Activated CD8-positive, alpha-beta T cell treated with anti-CD3 and anti-CD28 coated beads for 36 hours (primary cell): ENCODE measurements at regions of chr2 and their contacts with region 1.

Region 1: DNA sequence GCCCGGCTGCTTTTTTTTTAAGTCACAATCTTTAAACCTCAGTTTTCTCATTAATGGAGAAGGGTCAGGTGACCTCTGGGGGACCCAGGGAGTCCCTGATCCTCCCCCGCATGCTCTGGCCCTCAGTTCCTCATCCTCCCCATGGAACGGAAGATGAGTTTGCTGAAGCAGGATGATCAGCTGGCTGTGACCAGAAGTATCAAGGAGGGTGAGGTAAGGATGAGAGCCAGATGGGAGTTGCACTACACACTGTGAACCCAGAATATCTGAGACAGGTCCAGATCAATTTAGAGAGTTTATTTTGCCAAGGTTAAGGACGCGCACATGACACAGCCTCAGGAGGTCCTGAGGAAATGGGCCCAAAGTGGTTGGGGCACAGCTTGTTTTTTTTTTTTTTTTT is 3.8 kb downstream of the CATIP start:
- DNase-seq: no peak
- ATAC-seq: no peak
- H3K4me3 Mint-ChIP-seq: no peak overlapping the region
- H3K27ac Mint-ChIP-seq: no peak overlapping the region
- H3K4me1 Mint-ChIP-seq: no peaks in the 10 kb centered on the region
- H3K27me3 Mint-ChIP-seq: no peaks in the 10 kb centered on the region
- CTCF ChIP-seq: no peak

Region 2: DNA sequence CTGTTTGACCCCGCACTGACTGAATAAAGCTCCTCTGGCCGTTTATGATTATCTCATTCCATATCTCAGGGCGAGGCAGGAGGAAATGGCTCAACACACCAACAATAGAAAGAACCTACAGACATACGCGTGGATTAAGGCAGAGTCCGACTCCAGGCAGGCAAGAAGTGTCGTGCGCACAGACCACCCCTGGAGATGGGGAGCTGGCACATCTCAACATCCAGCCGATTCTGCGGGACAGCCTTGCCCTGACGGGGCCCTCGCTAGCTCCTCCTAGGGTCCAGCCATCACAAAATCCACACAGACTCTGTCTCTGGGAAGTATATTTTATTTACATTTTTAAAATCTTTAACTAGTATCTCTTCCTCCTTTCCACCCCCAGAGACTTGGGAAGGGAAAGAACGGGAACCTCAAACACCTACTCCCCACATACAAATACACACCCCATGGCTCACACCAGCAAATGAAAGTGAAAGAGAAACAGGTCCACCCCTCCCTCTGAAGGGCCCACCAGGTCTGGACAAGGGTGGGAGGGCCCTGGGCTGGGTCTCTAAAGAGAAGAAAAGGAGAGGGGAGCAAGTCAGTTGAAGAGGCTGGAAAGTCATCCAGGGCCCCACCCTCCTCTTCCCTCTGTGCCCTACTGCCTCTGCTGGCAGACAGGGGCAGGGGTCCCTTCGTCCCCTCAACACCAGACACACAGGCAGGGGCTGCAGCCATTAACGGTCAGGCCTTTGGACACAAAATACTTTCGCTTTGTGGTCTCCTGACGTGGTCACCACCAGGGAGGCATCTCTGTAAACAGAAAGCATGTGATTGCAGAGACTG is 96.4 kb before region 1 on chr2:
- CTCF ChIA-PET with region 1: no interaction called
- POLR2A ChIA-PET with region 1: no interaction called
- intact Hi-C with region 1: no loop called
- DNase-seq: no peak
- ATAC-seq: peak; percentile 63
- H3K4me3 Mint-ChIP-seq: no peak overlapping the region
- H3K27ac Mint-ChIP-seq: peak overlapping the region; percentile 7
- H3K4me1 Mint-ChIP-seq: peaks cover 26% of the 10 kb centered on the region
- H3K27me3 Mint-ChIP-seq: no peaks in the 10 kb centered on the region
- CTCF ChIP-seq: no peak

Region 3: DNA sequence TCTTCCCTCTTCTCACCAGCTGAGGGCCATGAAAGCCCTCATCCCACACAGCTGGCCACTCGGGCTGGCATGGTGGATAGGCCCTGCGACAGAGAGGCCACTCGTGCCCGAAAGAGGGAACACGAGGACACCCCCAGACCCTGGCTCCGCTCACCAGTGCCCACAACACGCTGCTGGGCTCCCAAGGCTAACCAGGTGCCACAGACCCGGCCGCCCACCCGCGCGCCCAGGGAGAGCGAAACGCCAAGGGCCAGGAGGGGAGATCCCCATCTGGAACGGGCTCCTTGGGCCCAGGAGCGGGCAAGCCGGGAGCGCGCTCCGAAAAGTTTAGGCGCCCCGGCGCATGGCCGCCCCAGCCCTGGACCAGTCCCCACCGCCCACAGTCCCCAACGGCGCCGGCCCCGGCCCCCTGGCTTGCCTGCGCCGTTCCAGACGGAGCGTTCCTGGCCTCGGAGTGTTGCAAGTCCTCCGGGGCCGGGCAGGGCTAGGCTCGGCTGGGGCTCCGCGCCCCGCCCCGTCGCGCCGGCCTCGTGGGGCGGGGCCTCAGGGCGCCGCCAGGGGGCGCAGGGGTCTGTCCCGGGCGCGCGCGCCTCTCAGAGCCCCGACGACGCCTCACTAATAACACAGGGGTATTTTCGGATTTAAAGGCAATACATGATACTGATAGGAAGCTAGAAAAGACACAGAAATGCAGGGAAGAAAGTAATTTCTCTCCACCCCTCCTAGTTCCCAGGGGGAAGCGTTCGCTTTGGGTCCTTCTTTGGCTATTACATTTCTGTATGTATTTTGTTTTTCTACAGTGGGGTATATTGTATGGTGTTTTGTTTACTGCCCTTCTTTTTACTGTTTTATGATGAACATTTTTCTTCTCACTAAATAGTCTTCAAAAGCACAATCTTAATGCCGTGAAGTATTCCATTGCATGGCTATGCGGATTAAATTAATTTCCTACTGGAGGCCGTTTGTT is 68.1 kb before region 1 on chr2 and contains the start of gene TMBIM1:
- CTCF ChIA-PET with region 1: interaction called, 14 read pairs
- POLR2A ChIA-PET with region 1: interaction called, 4 read pairs
- intact Hi-C with region 1: no loop called
- DNase-seq: peak; percentile 83
- ATAC-seq: peak; percentile 92
- H3K4me3 Mint-ChIP-seq: peak within 1 kb of the TSS; percentile 88
- H3K27ac Mint-ChIP-seq: peak within 1 kb of the TSS; percentile 92
- H3K4me1 Mint-ChIP-seq: peaks cover 49% of the 10 kb centered on the region
- H3K27me3 Mint-ChIP-seq: no peaks in the 10 kb centered on the region
- CTCF ChIP-seq: peak; percentile 97
- total RNA-seq, gene TMBIM1: 53.5 to 57.9 TPM

Region 4: DNA sequence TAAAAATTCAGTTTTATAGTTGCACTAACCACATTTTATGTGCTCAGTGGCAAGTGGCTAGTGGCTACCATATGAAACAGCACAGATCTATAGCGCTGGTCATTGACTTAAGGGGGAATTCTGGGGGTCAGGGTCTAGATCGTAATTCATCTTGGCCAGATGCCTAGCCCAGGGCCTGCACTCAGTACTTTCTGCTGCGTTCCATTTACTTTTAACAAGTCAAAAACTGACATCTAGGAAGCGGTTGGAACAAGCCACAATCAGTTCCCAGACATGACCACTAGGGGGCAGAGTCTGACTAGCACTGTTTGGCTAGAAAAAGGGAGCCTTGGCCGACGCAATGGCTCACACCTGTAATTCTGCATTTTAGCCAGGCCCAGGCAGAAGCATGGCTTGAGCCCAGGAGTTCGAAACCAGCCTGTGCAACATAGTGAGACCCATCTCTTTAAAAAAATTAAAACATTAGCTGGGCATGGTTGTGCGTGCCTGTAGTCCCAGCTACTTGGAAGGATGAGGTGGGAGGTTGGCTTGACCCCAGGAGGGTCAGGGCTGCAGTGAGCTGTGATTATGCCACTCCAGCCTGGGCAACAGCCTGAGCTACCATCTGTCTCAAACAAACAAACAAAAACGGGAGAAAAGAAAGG is 59.1 kb before region 1 on chr2:
- CTCF ChIA-PET with region 1: interaction called, 54 read pairs
- POLR2A ChIA-PET with region 1: interaction called, 3 read pairs
- intact Hi-C with region 1: loop called (anchors 1 kb)
- DNase-seq: peak; percentile 95
- ATAC-seq: peak; percentile 97
- H3K4me3 Mint-ChIP-seq: no peak overlapping the region
- H3K27ac Mint-ChIP-seq: no peak overlapping the region
- H3K4me1 Mint-ChIP-seq: peaks cover 5% of the 10 kb centered on the region
- H3K27me3 Mint-ChIP-seq: no peaks in the 10 kb centered on the region
- CTCF ChIP-seq: peak; percentile 90

Region 5: DNA sequence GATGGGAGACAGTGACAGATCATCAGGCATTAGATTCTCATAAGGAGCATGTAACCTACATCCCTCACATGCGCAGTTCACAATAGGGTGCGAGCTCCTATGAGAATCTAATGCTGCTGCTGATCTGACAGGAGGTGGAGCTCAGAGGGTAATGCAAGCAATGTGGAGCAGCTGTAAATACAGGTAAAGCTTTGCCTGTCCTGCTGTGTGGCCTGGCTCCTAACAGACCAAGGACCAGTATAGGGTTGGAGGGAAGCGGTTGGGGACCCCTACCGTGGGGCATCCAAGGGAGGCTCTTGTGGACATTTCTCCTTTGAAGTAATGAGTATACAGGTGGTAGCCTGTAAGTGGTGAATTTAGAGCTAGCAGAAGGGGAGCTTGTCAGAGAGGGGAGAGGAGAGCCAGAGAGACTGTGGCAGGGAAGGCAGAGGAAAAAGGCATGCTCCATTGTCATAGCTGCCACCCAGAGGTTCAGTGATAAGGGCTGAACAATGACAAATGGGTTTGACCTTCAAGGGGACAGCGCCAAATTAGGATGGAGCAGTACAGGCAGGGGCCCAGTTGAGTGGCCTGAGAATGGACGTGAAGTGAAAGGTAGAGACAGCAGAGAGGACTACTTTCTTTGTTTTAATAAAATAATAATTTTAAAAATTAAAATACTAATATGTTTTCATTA is 52.9 kb before region 1 on chr2:
- CTCF ChIA-PET with region 1: interaction called, 54 read pairs
- POLR2A ChIA-PET with region 1: interaction called, 3 read pairs
- intact Hi-C with region 1: no loop called
- DNase-seq: no peak
- ATAC-seq: no peak
- H3K4me3 Mint-ChIP-seq: no peak overlapping the region
- H3K27ac Mint-ChIP-seq: no peak overlapping the region
- H3K4me1 Mint-ChIP-seq: peaks cover 3% of the 10 kb centered on the region
- H3K27me3 Mint-ChIP-seq: no peaks in the 10 kb centered on the region
- CTCF ChIP-seq: no peak